ENCODE measurements at regions of chr1 and their contacts with region 1.

Region 1: DNA sequence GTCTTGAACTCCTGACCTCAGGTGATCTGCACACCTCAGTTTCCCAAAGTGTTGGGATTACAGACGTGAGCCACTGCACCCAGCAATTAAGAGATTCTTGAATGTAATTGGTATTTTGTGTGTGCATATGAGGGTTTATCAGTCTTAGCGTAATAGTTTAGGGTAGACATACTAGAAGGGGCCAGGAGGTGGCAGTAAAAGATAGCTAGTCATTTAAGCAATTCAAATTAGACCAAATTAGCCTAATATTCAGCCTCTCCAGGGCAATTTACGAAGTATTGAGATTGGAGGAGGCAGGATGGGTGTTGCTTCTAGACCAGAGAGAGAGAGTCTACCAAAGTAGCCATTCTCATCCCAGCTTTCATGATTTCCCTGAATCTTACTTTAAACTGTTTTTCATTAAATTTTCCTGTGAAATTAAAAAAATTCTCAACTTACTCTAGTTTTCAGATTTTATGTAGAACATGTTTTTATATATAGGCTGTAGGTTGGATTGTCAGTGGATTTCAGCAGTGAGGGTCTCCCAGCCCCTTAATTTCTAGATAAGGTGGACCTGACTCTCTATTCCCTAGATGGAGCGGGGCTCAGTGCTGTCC is 119.7 kb downstream of the HHAT start:
- H3K4me3 ChIP-seq: no peak overlapping the region
- H3K27ac ChIP-seq: no peak overlapping the region
- H3K4me1 ChIP-seq: peaks cover 5% of the 10 kb centered on the region
- CTCF ChIP-seq: peak; percentile 73

Region 2: DNA sequence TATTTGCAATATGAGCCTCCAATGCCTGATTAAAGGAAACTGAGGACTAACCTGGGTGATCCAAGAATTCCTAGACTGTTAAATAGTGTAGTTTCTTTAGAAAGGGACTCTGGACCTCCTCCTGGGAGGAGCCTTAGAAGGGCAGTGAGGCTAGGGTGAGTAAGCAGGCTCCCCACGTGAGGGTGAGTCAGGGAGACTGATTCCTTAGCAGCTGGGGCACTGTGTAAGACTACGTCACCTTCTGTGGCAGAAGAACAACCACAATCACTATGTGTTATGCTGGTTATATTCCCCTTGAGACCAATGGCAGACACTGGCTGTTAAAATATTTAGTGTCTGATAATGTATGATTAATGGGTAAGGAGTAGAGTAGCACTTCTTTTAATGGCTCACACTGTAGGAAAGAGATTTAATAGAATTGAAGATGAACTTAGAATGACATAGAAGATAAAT is 563.7 kb before region 1 on chr1:
- CTCF ChIA-PET with region 1: no interaction called
- POLR2A ChIA-PET with region 1: no interaction called
- H3K4me3 ChIP-seq: no peak overlapping the region
- H3K27ac ChIP-seq: no peak overlapping the region; the same call in 1 of the 2 replicates
- H3K4me1 ChIP-seq: peaks cover 3% of the 10 kb centered on the region
- CTCF ChIP-seq: no peak

Region 3: DNA sequence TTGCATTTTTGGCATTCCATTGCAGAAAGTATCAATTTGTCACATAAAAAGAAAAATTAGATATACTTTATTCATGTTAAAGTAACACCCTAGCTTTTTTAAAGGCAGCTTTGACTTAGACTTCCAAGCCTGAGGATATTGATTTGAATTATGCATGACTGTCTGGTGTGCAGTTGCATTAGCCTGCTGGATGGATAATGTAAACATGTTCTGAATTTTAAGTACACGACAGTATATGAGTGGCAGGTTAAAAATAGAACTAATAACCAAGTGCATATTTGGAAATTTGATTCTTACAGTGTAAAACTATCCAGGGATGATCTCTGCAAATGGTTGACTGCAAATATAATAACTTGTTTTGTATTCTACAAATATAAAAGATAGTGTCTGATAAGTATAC is 386.4 kb before region 1 on chr1:
- CTCF ChIA-PET with region 1: no interaction called
- POLR2A ChIA-PET with region 1: no interaction called
- H3K4me3 ChIP-seq: no peak overlapping the region
- H3K27ac ChIP-seq: no peak overlapping the region
- H3K4me1 ChIP-seq: peaks cover 2% of the 10 kb centered on the region; the same call in 1 of the 2 replicates
- CTCF ChIP-seq: no peak

Region 4: GRCh38 chr1:210239349-210240111 is 208.9 kb before region 1 on chr1:
- CTCF ChIA-PET with region 1: no interaction called
- POLR2A ChIA-PET with region 1: no interaction called
- H3K4me3 ChIP-seq: no peak overlapping the region
- H3K27ac ChIP-seq: no peak overlapping the region
- H3K4me1 ChIP-seq: peaks cover 43% of the 10 kb centered on the region
- CTCF ChIP-seq: no peak; the same call in 1 of the 2 replicates

Region 5: GRCh38 chr1:210407207-210407886 is 41.0 kb before region 1 on chr1:
- CTCF ChIA-PET with region 1: interaction called, 24 read pairs
- POLR2A ChIA-PET with region 1: interaction called, 7 read pairs
- H3K4me3 ChIP-seq: no peak overlapping the region
- H3K27ac ChIP-seq: no peak overlapping the region
- H3K4me1 ChIP-seq: peaks cover 4% of the 10 kb centered on the region; the same call in 1 of the 2 replicates
- CTCF ChIP-seq: peak; percentile 81

Region 6: GRCh38 chr1:210482491-210482890 is 34.1 kb after region 1 on chr1:
- CTCF ChIA-PET with region 1: no interaction called
- POLR2A ChIA-PET with region 1: no interaction called
- H3K4me3 ChIP-seq: no peak overlapping the region
- H3K27ac ChIP-seq: no peak overlapping the region
- H3K4me1 ChIP-seq: no peaks in the 10 kb centered on the region
- CTCF ChIP-seq: no peak

Region 7: DNA sequence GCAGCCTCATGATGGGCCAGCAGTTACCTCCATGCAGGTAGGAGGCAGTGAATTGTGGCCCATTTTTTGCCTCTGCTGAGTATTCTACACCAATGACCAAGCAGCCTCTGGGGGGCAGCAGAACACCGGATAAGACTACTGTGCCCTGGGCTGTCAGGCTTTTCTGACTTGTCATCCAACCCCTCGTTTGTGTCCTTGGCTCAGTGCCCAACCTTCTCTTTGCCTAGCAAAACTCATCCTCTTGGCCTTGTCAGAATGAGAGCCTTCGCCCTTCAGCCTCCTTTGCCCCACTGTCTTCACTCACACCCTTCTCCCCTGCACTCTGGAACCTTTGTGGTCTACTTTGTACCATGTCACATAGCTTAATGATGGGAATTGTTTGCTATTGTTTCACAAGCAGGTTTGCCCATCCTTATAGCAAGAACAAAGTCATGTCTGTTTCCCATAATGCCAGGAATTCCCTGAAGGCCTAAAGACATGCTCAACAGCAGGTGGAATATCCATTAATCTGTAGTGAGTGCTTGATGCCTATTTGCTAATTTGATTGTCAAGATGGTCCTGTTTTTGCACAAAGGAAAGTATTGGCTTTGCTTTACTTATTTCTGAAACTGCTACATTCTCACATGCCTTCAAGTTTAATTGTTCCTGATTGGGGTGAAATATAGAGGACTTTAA is 136.2 kb after region 1 on chr1:
- CTCF ChIA-PET with region 1: interaction called, 49 read pairs
- POLR2A ChIA-PET with region 1: no interaction called
- H3K4me3 ChIP-seq: no peak overlapping the region
- H3K27ac ChIP-seq: no peak overlapping the region
- H3K4me1 ChIP-seq: peaks cover 2% of the 10 kb centered on the region; the same call in 1 of the 2 replicates
- CTCF ChIP-seq: peak; percentile 85

Region 8: GRCh38 chr1:211133836-211134669 is 685.7 kb after region 1 on chr1 and contains the start of gene KCNH1:
- CTCF ChIA-PET with region 1: interaction called, 136 read pairs
- POLR2A ChIA-PET with region 1: interaction called, 3 read pairs
- H3K4me3 ChIP-seq: peak within 1 kb of the TSS; percentile 43
- H3K27ac ChIP-seq: no peak within 1 kb of the TSS; the same call in 1 of the 2 replicates
- H3K4me1 ChIP-seq: no peaks in the 10 kb centered on the region
- CTCF ChIP-seq: peak; percentile 89

Measured in HEK293 (cell line).